Activated naive CD4-positive, alpha-beta T cell treated with anti-CD3 and anti-CD28 coated beads for 36 hours (primary cell): ENCODE measurements at regions of chr4 and their contacts with region 1.

Region 1: GRCh38 chr4:146175541-146176453 is at the start of gene LSM6:
- DNase-seq: peak; percentile 89
- H3K4me3 Mint-ChIP-seq: peak within 1 kb of the TSS; percentile 80
- H3K27ac Mint-ChIP-seq: peak within 1 kb of the TSS; percentile 90
- H3K4me1 Mint-ChIP-seq: peaks cover 48% of the 10 kb centered on the region
- H3K27me3 Mint-ChIP-seq: no peaks in the 10 kb centered on the region
- total RNA-seq, gene LSM6: 62.9 to 65.8 TPM

Region 2: GRCh38 chr4:145732895-145733880 is 442.6 kb before region 1 on chr4:
- CTCF ChIA-PET with region 1: no interaction called
- intact Hi-C with region 1: loop called (anchors 1 kb)
- DNase-seq: peak; percentile 91
- H3K4me3 Mint-ChIP-seq: peak overlapping the region; percentile 75
- H3K27ac Mint-ChIP-seq: peak overlapping the region; percentile 36
- H3K4me1 Mint-ChIP-seq: peaks cover 7% of the 10 kb centered on the region
- H3K27me3 Mint-ChIP-seq: peaks cover 10% of the 10 kb centered on the region

Region 3: DNA sequence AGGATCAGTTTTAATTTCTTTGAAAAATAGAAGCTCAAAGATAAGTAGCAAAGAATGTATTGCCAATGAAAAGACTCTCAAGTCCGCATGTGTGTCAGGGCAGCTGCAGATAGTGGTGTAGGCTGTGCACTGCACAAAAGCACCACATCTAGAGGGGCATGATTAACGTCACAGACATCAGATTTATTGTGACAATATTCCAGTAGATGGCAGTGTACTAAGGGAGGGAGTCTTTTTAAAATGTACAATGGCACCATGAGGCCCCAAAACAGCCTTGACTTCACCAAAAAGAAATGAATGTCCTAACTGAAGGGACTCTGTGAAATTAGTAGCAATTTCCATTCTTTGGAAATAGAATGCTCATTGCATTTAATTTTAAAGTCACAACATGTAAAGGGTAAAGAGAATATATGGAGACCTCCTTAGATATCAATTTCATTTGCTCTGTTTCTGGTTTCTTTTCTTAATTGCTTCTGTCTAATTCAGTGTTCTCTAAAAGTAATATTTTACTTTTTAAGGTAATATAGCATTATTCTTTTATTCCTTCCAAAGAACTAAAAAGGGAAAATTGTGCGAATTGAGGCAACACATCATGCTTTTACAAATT is 335.5 kb before region 1 on chr4:
- CTCF ChIA-PET with region 1: no interaction called
- intact Hi-C with region 1: loop called (anchors 10 kb)
- DNase-seq: peak; percentile 22
- H3K4me3 Mint-ChIP-seq: no peak overlapping the region
- H3K27ac Mint-ChIP-seq: no peak overlapping the region
- H3K4me1 Mint-ChIP-seq: peaks cover 22% of the 10 kb centered on the region
- H3K27me3 Mint-ChIP-seq: no peaks in the 10 kb centered on the region

Region 4: GRCh38 chr4:146243141-146243882 is 67.5 kb after region 1 on chr4:
- CTCF ChIA-PET with region 1: no interaction called
- intact Hi-C with region 1: loop called (anchors 1 kb)
- DNase-seq: peak; percentile 71
- H3K4me3 Mint-ChIP-seq: peak overlapping the region; percentile 63
- H3K27ac Mint-ChIP-seq: peak overlapping the region; percentile 77
- H3K4me1 Mint-ChIP-seq: peaks cover 35% of the 10 kb centered on the region
- H3K27me3 Mint-ChIP-seq: peaks cover 3% of the 10 kb centered on the region

Region 5: DNA sequence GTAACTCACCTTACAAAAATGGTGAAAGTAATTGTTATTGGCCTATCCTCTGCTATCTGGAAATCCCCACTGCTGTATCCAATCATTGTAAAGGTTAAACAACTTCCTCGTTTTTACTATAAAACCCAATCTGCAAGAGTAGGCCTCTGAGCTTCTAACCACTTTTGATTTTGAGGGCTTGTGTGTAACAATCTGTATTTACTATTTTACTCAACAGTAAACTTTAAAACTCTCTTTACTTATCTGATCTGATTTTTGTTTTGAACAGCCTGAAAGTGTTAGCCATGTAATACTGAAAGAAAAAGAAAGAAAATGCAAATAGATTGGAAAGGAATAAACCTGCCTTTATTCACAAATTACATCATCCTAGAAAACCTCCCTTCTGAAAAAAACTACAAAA is 282.8 kb after region 1 on chr4:
- CTCF ChIA-PET with region 1: no interaction called
- intact Hi-C with region 1: loop called (anchors 5 kb)
- DNase-seq: peak; percentile 15
- H3K4me3 Mint-ChIP-seq: peak overlapping the region; percentile 63
- H3K27ac Mint-ChIP-seq: peak overlapping the region; percentile 91
- H3K4me1 Mint-ChIP-seq: peaks cover 32% of the 10 kb centered on the region
- H3K27me3 Mint-ChIP-seq: no peaks in the 10 kb centered on the region